Activated CD4-positive, alpha-beta T cell treated with anti-CD3 and anti-CD28 coated beads for 36 hours (primary cell): ENCODE measurements at regions of chr7 and their contacts with region 1.

Region 1: DNA sequence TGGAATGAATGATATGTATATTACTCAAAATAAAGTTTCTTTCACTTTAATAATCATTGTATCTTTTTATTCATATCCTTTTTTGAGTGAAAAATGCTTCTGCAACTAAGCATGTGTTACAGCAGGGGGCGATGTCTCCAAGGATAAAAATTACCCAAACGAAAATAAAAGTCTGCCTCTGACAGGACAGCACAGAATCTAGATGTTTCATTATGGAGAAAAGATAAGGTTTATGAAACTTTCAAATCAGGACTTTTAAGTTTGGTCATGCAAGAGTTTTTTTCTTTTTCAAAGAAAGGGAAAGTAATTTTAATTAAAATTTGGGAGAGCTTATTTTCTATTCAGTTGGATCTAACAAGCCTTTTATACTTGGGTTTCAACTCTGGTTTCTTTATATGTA is 48.4 kb downstream of the TES start:
- DNase-seq: peak; percentile 39
- ATAC-seq: peak; percentile 68
- H3K4me3 Mint-ChIP-seq: no peak overlapping the region
- H3K27ac Mint-ChIP-seq: no peak overlapping the region
- H3K4me1 Mint-ChIP-seq: peaks cover 20% of the 10 kb centered on the region
- H3K27me3 Mint-ChIP-seq: no peaks in the 10 kb centered on the region

Region 2: DNA sequence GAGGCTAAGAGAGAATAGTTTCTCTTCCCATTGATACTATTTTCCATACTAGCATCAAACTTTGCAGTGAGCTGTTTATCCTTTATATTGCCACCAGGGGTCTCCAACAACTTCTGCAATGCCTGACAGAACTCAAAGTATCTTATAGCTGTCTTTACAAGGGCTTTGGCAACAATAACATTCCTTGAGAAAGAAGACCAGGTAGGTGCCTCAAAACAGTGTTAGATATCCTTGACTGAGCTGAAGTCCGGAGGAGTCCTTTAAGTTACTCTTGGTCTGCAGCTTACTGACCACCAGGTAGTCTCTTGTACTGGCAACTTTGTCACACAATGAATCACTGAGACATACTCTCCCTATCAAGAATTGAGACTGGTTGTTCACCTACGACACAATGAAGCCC is 78.4 kb before region 1 on chr7:
- CTCF ChIA-PET with region 1: interaction called, 11 read pairs
- POLR2A ChIA-PET with region 1: no interaction called
- intact Hi-C with region 1: no loop called
- DNase-seq: peak; percentile 21
- ATAC-seq: peak; percentile 74
- H3K4me3 Mint-ChIP-seq: no peak overlapping the region
- H3K27ac Mint-ChIP-seq: no peak overlapping the region
- H3K4me1 Mint-ChIP-seq: peaks cover 7% of the 10 kb centered on the region
- H3K27me3 Mint-ChIP-seq: no peaks in the 10 kb centered on the region

Region 3: DNA sequence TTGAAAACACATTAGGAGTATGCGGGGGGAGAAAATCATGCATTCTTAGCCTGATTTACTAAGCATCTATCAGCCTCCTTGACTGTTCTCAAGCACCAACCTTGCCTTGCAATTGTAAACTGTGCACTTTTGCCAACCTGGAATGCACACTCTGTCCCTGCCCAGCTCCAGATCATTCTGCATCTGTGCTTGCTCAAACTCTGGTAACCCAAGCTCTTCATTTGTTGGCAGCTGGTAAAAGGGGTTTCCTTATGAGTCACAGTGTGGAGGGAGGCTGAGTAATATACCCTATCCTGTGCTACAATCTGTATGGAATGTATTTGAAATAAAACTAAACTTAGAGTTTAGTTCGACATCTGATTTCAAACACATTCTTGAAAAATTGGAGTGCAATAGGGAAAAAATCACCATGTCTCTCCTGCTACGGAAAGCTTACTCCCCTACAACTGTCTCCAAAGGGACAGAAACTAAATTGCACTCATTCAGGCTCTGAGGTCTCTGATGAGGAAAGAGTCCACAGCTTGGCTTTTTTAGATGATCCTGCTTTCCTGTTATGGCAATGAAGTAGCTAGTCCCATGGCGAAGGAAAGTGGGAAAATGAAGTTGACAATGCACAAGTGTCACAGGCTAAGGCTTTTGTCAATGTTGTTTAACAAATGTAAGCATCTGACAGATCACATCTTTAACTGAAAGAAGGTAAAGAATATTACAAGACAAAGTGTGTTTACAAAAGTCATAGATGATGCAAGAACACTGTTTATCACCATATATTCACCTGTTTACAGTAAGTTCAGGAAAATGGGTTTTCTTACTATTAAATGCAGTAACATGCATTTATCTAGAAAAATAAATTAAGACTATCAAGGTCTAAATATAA is 13.5 kb after region 1 on chr7:
- CTCF ChIA-PET with region 1: interaction called, 13 read pairs
- POLR2A ChIA-PET with region 1: no interaction called
- intact Hi-C with region 1: no loop called
- DNase-seq: peak; percentile 11
- ATAC-seq: peak; percentile 74
- H3K4me3 Mint-ChIP-seq: no peak overlapping the region
- H3K27ac Mint-ChIP-seq: no peak overlapping the region
- H3K4me1 Mint-ChIP-seq: no peaks in the 10 kb centered on the region
- H3K27me3 Mint-ChIP-seq: peaks cover 15% of the 10 kb centered on the region

Region 4: GRCh38 chr7:116525913-116526861 is 267.5 kb after region 1 on chr7:
- CTCF ChIA-PET with region 1: interaction called, 12 read pairs
- POLR2A ChIA-PET with region 1: no interaction called
- intact Hi-C with region 1: loop called (anchors 1 to 2 kb)
- DNase-seq: peak; percentile 80
- ATAC-seq: peak; percentile 96
- H3K4me3 Mint-ChIP-seq: peak overlapping the region; percentile 71
- H3K27ac Mint-ChIP-seq: no peak overlapping the region
- H3K4me1 Mint-ChIP-seq: peaks cover 20% of the 10 kb centered on the region
- H3K27me3 Mint-ChIP-seq: peaks cover 59% of the 10 kb centered on the region

Region 5: GRCh38 chr7:116679500-116679899 is 420.8 kb after region 1 on chr7:
- CTCF ChIA-PET with region 1: no interaction called
- POLR2A ChIA-PET with region 1: no interaction called
- intact Hi-C with region 1: loop called in 1 of 2 experiments (anchors 2 kb)
- DNase-seq: no peak
- ATAC-seq: peak; percentile 99
- H3K4me3 Mint-ChIP-seq: no peak overlapping the region
- H3K27ac Mint-ChIP-seq: no peak overlapping the region
- H3K4me1 Mint-ChIP-seq: peaks cover 8% of the 10 kb centered on the region
- H3K27me3 Mint-ChIP-seq: peaks cover 33% of the 10 kb centered on the region

Region 6: DNA sequence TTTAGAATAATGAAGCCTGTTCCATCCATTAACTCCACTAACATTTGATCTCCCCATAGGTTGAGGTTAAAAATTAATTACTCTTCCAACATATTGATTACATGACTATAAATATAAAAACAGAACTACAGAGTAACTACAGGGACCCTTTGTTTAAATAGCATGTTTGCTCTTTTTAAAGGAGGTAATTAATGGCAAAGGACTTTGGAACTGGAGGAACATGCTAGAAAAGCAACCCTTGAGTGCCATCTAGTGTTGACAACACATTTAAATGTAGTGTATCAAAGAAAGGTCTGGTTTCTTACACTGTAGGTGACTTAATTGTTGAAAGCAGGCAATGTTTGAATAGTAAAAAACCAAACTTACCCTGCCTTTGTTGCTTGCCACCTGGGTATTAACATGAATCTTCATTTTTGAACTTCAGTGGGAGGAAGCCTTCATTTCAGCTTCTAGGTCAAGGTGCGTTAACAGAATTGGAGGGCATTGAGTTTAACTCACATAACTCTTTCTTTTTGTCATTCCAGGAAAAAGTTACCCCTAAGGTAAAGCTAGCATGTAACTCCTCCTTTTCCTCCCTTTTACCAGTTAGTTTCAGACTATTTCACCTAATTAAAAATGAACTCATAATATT is 551.0 kb after region 1 on chr7:
- CTCF ChIA-PET with region 1: interaction called, 3 read pairs
- POLR2A ChIA-PET with region 1: no interaction called
- intact Hi-C with region 1: loop called (anchors 2 to 5 kb)
- DNase-seq: no peak
- ATAC-seq: peak; percentile 69
- H3K4me3 Mint-ChIP-seq: no peak overlapping the region
- H3K27ac Mint-ChIP-seq: no peak overlapping the region
- H3K4me1 Mint-ChIP-seq: no peaks in the 10 kb centered on the region
- H3K27me3 Mint-ChIP-seq: peaks cover 3% of the 10 kb centered on the region